Gastrocnemius medialis (tissue), 4 donors: ENCODE measurements at regions of chr2 and their contacts with region 1.

Region 1: DNA sequence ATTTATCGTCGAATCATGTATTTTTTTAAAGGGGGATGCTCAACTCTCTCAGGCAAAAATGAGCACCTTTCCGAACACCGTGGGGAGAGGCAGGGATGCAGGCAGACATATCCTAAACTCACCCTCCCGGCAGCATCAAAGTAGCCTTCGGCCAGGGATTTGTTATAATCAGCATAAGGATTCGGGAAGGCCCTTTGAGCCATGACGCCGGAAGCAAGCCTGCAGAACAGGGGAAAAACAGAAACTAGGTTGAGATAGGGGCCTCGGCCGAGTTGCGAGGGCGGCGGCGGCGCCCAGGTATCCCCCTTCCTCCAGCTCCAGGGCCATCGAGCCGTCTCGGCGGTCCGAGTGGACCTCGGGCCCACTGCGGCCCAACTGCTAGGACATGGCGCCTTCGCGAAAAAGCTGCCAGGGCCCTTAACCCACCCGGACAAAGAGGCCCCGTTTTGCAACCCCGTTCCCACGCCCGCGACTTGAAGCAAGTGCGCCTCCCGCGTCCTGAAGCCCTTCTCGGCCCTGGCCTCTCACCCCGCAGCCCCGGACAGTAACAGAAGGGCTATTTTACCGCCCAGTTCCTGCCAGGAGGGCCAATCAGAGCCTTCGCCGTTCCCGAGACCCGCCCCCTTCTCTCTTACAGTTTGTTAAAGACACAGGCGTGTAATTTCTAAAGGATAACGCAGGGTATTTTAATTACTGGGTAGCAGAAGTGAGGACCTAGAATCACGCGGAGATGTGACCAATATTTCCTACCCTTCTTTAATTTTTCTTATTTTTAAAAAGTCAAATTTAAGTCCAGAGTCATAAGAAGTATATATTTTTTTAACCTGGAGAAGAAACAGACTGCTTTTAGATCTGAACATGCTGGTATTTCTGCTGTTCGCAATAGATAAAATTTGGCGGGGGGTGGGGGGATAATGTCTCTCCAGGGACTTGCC is at the start of gene LANCL1:
- DNase-seq: peak; percentile 88 to 90
- ATAC-seq: peak; percentile 99 to 100
- H3K4me3 ChIP-seq: peak within 1 kb of the TSS; percentile 72 to 94 (median 87)
- H3K27ac ChIP-seq: peak within 1 kb of the TSS; percentile 78 to 86 (median 82)
- H3K4me1 ChIP-seq: peaks cover 10 to 22% of the 10 kb centered on the region in 2 donors
- H3K27me3 ChIP-seq: no peaks in the 10 kb centered on the region
- CTCF ChIP-seq: peak in 1 of 5 experiments; percentile 7
- POLR2A ChIP-seq: peak; percentile 71 to 77
- total RNA-seq, gene LANCL1: 19.7 to 38.3 (median 24.3) TPM

Region 2: DNA sequence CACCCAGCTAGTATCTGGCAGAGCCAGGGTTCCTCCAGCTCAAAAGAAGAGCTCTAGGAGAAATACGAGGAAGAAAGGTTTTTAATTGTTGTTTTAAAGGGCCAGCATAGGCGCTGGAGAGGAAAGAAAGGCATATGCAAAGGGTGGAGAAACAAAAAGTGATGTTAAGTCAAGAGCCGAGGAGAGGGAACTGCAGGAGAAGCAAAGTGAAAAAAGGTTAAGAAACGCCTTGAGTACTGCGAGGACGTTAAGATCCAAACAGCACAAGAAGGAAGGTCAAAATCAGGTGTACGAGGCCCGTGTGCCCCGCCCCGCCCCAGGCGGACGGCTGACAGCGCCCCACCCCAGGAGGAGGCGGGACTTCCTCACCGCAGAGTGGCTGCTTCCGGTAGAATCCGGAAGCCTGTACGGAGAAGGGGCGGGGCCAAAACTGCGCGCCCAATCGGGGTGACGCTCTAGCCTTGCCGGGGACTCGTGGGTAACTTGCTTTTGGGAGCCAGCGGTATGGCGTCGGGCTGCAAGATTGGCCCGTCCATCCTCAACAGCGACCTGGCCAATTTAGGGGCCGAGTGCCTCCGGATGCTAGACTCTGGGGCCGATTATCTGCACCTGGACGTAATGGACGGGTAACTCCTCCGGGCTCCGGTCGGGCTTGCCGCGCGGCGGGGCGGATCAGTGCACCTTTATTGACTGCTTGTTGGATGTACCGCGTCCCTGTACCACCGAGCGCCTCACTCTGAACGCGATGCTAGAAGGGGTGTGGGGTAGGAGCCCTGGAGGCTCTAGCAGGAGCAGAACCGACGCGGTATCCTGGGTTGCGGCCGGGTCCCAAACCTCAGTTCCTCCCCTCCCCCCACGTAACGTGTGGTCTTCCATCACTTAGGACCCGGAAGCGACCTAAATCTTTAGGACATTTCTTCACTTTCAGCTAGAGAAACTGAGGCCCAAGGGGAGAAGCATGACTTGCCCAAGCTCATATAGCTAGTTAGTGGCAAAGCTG is 474.0 kb before region 1 on chr2 and contains the start of gene RPE:
- in situ Hi-C with region 1: no loop called
- intact Hi-C with region 1: loop called (anchors 1 kb)
- DNase-seq: peak; percentile 92 to 95
- ATAC-seq: peak; percentile 99
- H3K4me3 ChIP-seq: peak within 1 kb of the TSS; percentile 94 to 98 (median 95)
- H3K27ac ChIP-seq: peak within 1 kb of the TSS; percentile 79 to 91 (median 84)
- H3K4me1 ChIP-seq: peaks cover 37 to 47% of the 10 kb centered on the region in 2 donors
- H3K27me3 ChIP-seq: no peaks in the 10 kb centered on the region
- CTCF ChIP-seq: no peak
- POLR2A ChIP-seq: peak; percentile 47 to 76
- total RNA-seq, gene RPE: 9.2 to 73.5 (median 23.2) TPM

Region 3: DNA sequence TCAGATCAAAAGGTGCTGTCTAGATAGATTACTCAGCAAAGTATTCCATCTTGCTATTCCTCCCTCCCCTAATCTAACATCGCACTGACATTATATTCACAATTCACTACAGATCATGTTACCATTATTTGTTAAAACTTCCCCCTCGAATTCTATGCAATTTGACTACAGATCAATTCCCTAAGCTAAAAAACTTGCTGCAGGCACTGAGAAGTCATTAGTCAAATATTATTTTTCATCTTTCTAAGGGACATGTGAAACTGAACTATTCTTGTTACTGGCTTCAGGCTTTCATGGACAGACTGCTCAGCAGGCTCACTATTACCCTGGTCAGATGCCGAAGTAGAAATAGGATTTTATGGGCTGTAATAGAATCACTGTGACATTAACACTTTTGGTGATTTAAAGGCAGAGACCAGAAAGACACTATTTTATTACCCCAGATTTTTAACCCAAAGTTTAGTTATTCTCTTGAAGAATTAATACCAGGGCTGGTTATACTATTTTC is 176.5 kb before region 1 on chr2:
- in situ Hi-C with region 1: no loop called
- intact Hi-C with region 1: loop called (anchors 10 kb)
- DNase-seq: no peak
- ATAC-seq: peak; percentile 60 to 64
- H3K4me3 ChIP-seq: peak overlapping the region; percentile 18 to 32 (median 28)
- H3K27ac ChIP-seq: peak overlapping the region; percentile 75 to 86 (median 84)
- H3K4me1 ChIP-seq: peaks cover 29 to 34% of the 10 kb centered on the region in 2 donors
- H3K27me3 ChIP-seq: no peaks in the 10 kb centered on the region
- CTCF ChIP-seq: no peak
- POLR2A ChIP-seq: no peak